HepG2 (cell line): ENCODE measurements at regions of chr6 and their contacts with region 1.

Region 1: GRCh38 chr6:31827286-31828079 is at the start of gene HSPA1B:
- DNase-seq: peak; percentile 100
- ATAC-seq: peak; percentile 89
- H3K4me3 ChIP-seq: peak within 1 kb of the TSS; percentile 59 to 91 (median 86)
- H3K27ac ChIP-seq: peak within 1 kb of the TSS; percentile 68
- H3K4me1 ChIP-seq: peaks cover 44% of the 10 kb centered on the region
- H3K27me3 ChIP-seq: no peaks in the 10 kb centered on the region; a peak in 1 of 5 replicates
- CTCF ChIP-seq: peak; percentile 29
- EP300 ChIP-seq: peak in 1 of 2 experiments; percentile 82; a peak in 2 of 4 replicates
- POLR2A ChIP-seq: peak; percentile 100
- RAD21 ChIP-seq: peak; percentile 76
- total RNA-seq, gene HSPA1B: 186 and 189 TPM in 2 replicates

Region 2: GRCh38 chr6:31652925-31653718 is 174.4 kb before region 1 on chr6:
- CTCF ChIA-PET with region 1: no interaction called
- POLR2A ChIA-PET with region 1: interaction called, 35 read pairs
- in situ Hi-C with region 1: no loop called
- intact Hi-C with region 1: no loop called
- DNase-seq: peak; percentile 98
- ATAC-seq: peak; percentile 55
- H3K4me3 ChIP-seq: peak overlapping the region; percentile 73 to 88 (median 77)
- H3K27ac ChIP-seq: peak overlapping the region; percentile 96
- H3K4me1 ChIP-seq: peaks cover 70% of the 10 kb centered on the region
- H3K27me3 ChIP-seq: no peaks in the 10 kb centered on the region; a peak in 2 of 5 replicates
- CTCF ChIP-seq: peak; percentile 63
- EP300 ChIP-seq: no peak; a peak in 3 of 4 replicates
- POLR2A ChIP-seq: peak in 1 of 2 experiments; percentile 72; a peak in 1 of 4 replicates
- RAD21 ChIP-seq: 0 out of 2 replicates have a peak, but pooled peaks have one; percentile 7

Region 3: DNA sequence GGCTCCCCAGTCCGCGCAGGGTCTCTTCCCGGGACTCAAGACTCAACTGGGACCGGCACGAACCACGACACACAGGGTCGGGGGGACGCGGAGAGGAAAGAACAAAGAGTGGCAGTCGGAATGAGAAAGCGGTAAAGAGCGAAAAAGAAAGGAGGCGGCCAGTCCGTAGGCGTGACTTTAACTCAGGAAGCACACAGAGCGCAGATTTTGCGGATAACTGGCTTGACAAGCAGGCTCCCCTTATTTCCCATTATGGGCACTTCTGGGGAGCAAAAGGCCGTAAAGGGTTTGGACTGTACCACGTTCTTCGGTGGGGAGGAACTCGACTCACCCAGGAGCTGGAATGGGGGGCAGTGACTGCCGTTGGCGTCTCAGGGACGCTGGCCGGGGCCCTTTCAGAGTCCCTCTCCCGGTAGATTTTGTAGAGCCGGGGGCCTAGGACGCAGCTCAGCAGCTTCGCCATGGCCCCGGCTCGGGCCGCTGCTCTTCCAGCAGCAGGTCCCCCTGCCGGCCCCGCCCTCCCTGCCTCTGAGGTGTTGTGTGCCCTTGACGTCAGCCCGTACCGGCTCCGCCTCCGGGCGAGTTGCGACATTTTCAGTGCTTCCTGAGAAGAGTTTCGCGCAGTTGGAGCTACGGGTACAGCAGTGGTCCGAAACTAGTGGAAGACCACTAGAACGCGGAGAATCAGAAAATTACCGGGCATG is 124.5 kb before region 1 on chr6 and contains the start of gene ABHD16A:
- CTCF ChIA-PET with region 1: no interaction called
- POLR2A ChIA-PET with region 1: interaction called, 12 read pairs
- in situ Hi-C with region 1: no loop called
- intact Hi-C with region 1: no loop called
- DNase-seq: peak; percentile 98
- ATAC-seq: peak; percentile 93
- H3K4me3 ChIP-seq: peak within 1 kb of the TSS; percentile 71 to 84 (median 81)
- H3K27ac ChIP-seq: peak within 1 kb of the TSS; percentile 85
- H3K4me1 ChIP-seq: peaks cover 39% of the 10 kb centered on the region
- H3K27me3 ChIP-seq: peaks cover 0 to 3% of the 10 kb centered on the region in 2 experiments; a peak in 2 of 5 replicates
- CTCF ChIP-seq: peak; percentile 33
- EP300 ChIP-seq: peak; percentile 56 to 79; a peak in 3 of 4 replicates
- POLR2A ChIP-seq: peak; percentile 93 to 96
- RAD21 ChIP-seq: no peak
- total RNA-seq, gene ABHD16A: 16.2 and 43.5 TPM in 2 replicates

Region 4: DNA sequence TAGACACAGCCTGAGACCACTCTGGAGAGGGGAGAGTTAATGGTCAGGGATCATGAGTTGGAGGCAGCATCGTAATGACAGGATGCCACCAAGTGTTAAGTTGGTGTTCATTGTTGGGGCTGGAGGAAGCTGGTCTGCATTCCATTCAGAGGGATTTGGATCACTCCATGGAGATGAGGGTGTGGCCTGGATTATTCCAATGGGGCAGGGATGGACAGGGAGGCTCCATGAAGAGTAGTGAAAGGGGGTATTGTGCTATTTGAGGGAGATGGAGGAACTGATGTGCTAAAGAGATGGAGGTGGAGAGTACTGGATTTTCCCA is 63.9 kb before region 1 on chr6:
- CTCF ChIA-PET with region 1: no interaction called
- POLR2A ChIA-PET with region 1: interaction called, 15 read pairs
- in situ Hi-C with region 1: no loop called
- intact Hi-C with region 1: no loop called
- DNase-seq: peak; percentile 68
- ATAC-seq: peak; percentile 10
- H3K4me3 ChIP-seq: no peak overlapping the region
- H3K27ac ChIP-seq: no peak overlapping the region
- H3K4me1 ChIP-seq: peaks cover 47% of the 10 kb centered on the region
- H3K27me3 ChIP-seq: no peaks in the 10 kb centered on the region
- CTCF ChIP-seq: peak; percentile 77
- EP300 ChIP-seq: no peak
- POLR2A ChIP-seq: no peak
- RAD21 ChIP-seq: no peak

Region 5: DNA sequence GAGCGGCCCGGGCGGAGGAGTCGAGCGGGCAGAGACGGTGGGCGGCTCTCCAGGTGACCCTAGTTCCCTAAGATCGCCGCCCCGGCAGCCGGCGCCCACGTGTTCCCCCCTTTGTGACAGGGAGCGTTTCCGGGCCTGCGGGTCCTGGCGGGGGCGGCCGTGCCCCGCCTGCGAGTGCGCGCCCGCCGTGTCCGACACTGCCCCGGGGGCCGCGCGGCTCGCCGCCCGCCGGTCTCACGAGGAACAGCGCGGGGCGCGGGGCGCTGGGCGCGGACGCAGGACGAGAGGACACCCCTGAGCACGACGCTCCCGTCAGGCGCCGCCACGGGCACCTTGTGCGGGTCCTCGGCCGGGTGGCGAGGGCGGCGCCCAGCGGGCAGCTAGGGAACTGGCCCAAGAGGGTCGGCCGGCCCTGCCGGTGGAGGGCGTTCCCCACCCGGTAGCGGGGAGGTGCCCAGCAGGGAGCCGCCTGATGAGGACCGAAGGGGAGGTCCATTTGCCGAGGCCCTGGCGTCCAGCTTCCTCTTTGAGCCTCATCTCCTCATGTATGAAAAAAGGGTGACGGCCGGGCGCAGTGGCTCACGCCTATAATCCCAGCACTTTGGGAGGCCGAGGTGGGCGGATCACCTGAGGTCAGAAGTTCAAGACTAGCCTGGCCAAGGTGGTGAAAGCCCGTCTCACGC is 31.7 kb before region 1 on chr6 and contains the start of gene VARS1:
- CTCF ChIA-PET with region 1: interaction called, 10 read pairs
- POLR2A ChIA-PET with region 1: interaction called, 61 read pairs
- in situ Hi-C with region 1: no loop called
- intact Hi-C with region 1: loop called (anchors 1 kb)
- DNase-seq: peak; percentile 90
- ATAC-seq: peak; percentile 89
- H3K4me3 ChIP-seq: peak within 1 kb of the TSS; percentile 89 to 98 (median 98)
- H3K27ac ChIP-seq: peak within 1 kb of the TSS; percentile 76
- H3K4me1 ChIP-seq: peaks cover 25% of the 10 kb centered on the region
- H3K27me3 ChIP-seq: no peaks in the 10 kb centered on the region; a peak in 1 of 5 replicates
- CTCF ChIP-seq: peak; percentile 98
- EP300 ChIP-seq: no peak
- POLR2A ChIP-seq: peak in 1 of 2 experiments; percentile 46; a peak in 1 of 4 replicates
- RAD21 ChIP-seq: peak; percentile 97
- total RNA-seq, gene VARS1: 56.1 and 59.2 TPM in 2 replicates

Region 6: DNA sequence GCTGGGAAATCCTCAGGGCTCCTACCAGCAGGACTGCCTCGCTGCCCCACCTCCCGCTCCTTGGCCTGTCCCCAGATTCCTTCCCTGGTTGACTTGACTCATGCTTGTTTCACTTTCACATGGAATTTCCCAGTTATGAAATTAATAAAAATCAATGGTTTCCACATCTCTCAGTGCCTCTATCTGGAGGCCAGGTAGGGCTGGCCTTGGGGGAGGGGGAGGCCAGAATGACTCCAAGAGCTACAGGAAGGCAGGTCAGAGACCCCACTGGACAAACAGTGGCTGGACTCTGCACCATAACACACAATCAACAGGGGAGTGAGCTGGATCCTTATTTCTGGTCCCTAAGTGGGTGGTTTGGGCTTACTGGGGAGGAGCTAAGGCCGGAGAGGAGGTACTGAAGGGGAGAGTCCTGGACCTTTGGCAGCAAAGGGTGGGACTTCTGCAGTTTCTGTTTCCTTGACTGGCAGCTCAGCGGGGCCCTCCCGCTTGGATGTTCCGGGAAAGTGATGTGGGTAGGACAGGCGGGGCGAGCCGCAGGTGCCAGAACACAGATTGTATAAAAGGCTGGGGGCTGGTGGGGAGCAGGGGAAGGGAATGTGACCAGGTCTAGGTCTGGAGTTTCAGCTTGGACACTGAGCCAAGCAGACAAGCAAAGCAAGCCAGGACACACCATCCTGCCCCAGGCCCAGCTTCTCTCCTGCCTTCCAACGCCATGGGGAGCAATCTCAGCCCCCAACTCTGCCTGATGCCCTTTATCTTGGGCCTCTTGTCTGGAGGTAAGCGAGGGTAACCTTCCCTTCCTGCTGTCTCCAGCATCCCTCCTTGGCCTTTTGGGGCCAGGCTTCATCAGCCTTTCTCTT is 118.3 kb after region 1 on chr6 and contains the start of gene CFB:
- CTCF ChIA-PET with region 1: no interaction called
- POLR2A ChIA-PET with region 1: interaction called, 18 read pairs
- in situ Hi-C with region 1: no loop called
- intact Hi-C with region 1: loop called (anchors 10 kb)
- DNase-seq: peak; percentile 100
- ATAC-seq: peak; percentile 95
- H3K4me3 ChIP-seq: peak within 1 kb of the TSS; percentile 59 to 90 (median 66)
- H3K27ac ChIP-seq: peak within 1 kb of the TSS; percentile 91
- H3K4me1 ChIP-seq: peaks cover 85% of the 10 kb centered on the region
- H3K27me3 ChIP-seq: no peaks in the 10 kb centered on the region; a peak in 1 of 5 replicates
- CTCF ChIP-seq: peak; percentile 8; the same call in 1 of the 2 replicates
- EP300 ChIP-seq: peak; percentile 89 to 94; a peak in 3 of 4 replicates
- POLR2A ChIP-seq: peak in 1 of 2 experiments; percentile 96; a peak in 2 of 4 replicates
- RAD21 ChIP-seq: peak; percentile 40
- total RNA-seq, gene CFB: 71.1 and 171 TPM in 2 replicates